ENCODE measurements at regions of chr7 and their contacts with region 1.

Region 1: DNA sequence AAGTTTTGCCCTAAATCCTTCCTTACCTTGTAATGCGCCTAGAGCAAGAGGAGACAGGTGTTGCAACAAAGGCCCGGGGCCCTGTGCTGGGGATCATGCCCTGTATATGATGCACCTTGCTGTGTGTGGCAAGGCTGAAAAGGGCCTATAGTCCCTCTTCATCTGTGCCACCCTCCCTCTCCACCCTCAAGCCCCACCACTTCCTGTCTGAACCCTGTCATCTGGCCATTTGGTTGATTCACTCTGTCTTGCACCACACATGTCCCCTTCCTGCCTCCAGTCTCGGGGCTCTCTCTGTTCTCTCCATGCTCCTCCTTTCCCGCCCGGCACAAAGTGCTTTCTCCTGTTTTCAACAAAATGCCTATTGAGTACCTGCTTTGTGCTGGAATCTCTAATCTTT is 11.5 kb upstream of the MALSU1 start:
- DNase-seq: no peak
- H3K4me3 ChIP-seq: no peak overlapping the region
- H3K27ac ChIP-seq: no peak overlapping the region
- H3K4me1 ChIP-seq: peaks cover 3 to 8% of the 10 kb centered on the region in 2 donors
- H3K27me3 ChIP-seq: no peaks in the 10 kb centered on the region
- CTCF ChIP-seq: no peak
- POLR2A ChIP-seq: no peak

Region 2: DNA sequence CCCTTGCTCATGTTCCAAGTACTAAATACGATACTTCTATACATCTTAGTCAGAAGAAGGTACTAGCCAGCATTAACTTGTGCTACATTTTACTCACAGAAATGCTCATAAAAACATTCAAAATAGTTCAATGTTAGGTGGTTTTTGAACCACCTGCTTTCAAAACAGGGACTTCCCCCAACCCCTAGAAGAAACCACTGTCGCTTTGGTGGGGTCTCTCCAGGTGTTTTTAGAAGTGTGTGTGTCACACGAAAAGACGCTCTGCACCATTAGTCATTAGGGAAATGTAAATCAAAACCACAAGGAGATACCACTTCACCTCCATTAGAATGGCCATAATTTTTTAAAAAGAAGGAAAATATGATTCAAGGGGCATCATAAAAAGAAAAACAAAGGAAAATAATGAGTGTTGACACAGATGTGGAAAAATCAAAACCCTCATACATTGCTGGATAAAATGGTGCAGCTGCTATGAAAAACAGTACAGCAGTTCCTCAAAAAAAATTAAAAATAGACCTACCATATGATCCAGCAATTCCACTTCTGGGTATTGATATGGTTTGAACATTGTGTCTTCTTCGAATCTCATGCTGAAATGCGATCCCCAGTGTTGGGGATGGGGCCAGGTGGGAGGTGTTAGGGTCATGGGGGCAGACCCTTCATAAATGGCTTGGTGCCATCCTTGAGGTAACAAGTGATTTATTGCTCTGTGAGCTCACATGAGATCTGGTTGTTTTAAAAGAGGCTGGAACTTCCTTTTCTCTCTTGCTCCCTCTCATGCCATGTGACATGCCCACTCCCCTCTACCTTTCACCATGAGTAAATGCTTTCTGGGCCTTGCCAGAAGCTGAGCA is 85.8 kb after region 1 on chr7:
- intact Hi-C with region 1: loop called (anchors 10 kb)
- DNase-seq: no peak
- H3K4me3 ChIP-seq: no peak overlapping the region
- H3K27ac ChIP-seq: no peak overlapping the region
- H3K4me1 ChIP-seq: no peaks in the 10 kb centered on the region
- H3K27me3 ChIP-seq: no peaks in the 10 kb centered on the region
- CTCF ChIP-seq: no peak
- POLR2A ChIP-seq: no peak

Measured in thyroid gland (tissue), 4 donors.